ENCODE measurements at regions of chr18 and their contacts with region 1.

Region 1: DNA sequence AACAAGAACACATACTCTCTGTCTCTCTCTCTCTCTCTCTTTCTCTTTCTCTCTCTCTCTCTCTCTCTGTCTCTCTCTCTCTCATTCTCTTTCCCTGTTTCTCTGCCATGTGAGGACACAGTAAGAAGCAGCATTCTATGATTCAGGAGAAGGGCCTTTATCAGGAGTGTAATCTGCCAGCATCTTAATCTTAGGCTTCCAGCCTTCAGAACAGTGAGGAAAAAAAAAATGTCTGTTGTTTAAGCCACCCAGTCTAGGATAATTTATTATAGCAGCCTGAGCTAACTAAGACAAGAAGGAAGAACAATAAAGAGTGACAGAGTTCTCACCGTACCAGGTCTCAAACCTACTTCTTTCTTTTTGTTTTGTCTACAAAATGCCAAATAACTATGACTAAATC is 399.4 kb downstream of the SOCS6 start:
- DNase-seq: no peak
- ATAC-seq: no peak
- H3K4me3 ChIP-seq: no peak overlapping the region
- H3K4me3 Mint-ChIP-seq: no peak overlapping the region
- H3K27ac ChIP-seq: no peak overlapping the region
- H3K27ac Mint-ChIP-seq: peak overlapping the region; percentile 62
- H3K4me1 ChIP-seq: no peaks in the 10 kb centered on the region
- H3K4me1 Mint-ChIP-seq: peaks cover 39% of the 10 kb centered on the region
- H3K27me3 ChIP-seq: no peaks in the 10 kb centered on the region
- H3K27me3 Mint-ChIP-seq: no peaks in the 10 kb centered on the region
- CTCF ChIP-seq: no peak

Region 2: DNA sequence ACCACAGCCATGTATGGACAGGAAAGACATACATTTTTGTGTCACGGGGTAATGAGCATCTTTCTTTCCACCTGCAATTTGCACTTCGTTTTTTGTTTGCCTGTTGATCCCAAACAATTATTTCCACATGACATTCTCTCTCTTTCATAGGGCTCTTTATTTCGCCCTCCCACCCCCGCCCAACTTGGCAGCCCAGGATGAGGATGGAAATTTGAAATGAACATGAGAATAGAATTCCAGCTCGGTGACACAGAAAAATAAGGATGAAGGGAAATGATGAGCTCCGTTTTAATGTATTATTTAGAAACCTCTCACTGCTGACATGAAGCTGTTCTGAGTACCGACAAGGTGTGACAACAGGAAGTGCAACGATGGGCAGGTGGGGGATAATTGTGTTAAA is 43.9 kb after region 1 on chr18:
- CTCF ChIA-PET with region 1: no interaction called
- POLR2A ChIA-PET with region 1: no interaction called
- intact Hi-C with region 1: loop called in 1 of 2 experiments (anchors 2 kb)
- DNase-seq: no peak
- ATAC-seq: no peak
- H3K4me3 ChIP-seq: no peak overlapping the region
- H3K4me3 Mint-ChIP-seq: no peak overlapping the region
- H3K27ac ChIP-seq: no peak overlapping the region
- H3K27ac Mint-ChIP-seq: no peak overlapping the region
- H3K4me1 ChIP-seq: no peaks in the 10 kb centered on the region
- H3K4me1 Mint-ChIP-seq: peaks cover 11% of the 10 kb centered on the region
- H3K27me3 ChIP-seq: no peaks in the 10 kb centered on the region
- H3K27me3 Mint-ChIP-seq: no peaks in the 10 kb centered on the region
- CTCF ChIP-seq: no peak

Region 3: GRCh38 chr18:70956554-70956953 is 268.3 kb after region 1 on chr18:
- CTCF ChIA-PET with region 1: no interaction called
- POLR2A ChIA-PET with region 1: no interaction called
- intact Hi-C with region 1: no loop called
- DNase-seq: no peak
- ATAC-seq: no peak
- H3K4me3 ChIP-seq: no peak overlapping the region
- H3K4me3 Mint-ChIP-seq: no peak overlapping the region
- H3K27ac ChIP-seq: no peak overlapping the region
- H3K27ac Mint-ChIP-seq: no peak overlapping the region
- H3K4me1 ChIP-seq: no peaks in the 10 kb centered on the region
- H3K4me1 Mint-ChIP-seq: no peaks in the 10 kb centered on the region
- H3K27me3 ChIP-seq: no peaks in the 10 kb centered on the region
- H3K27me3 Mint-ChIP-seq: no peaks in the 10 kb centered on the region
- CTCF ChIP-seq: no peak